Activated T-helper 1 cell treated with anti-CD3 and anti-CD28 coated beads, Interleukin-12 subunit alpha, Interleukin-12 subunit beta, Interleukin-2, Interleukin-4 antibody, amounts not matched to agents 30 ng/mL and 10 ng/mL and 1 ng/mL, durations not matched to agents 14 hours and 24 hours and 36 hours (primary cell): ENCODE measurements at regions of chr3 and their contacts with region 1.

Region 1: GRCh38 chr3:184513276-184514170 is 48.1 kb upstream of the EPHB3 start:
- DNase-seq: peak; percentile 76
- H3K4me3 Mint-ChIP-seq: peak overlapping the region; percentile 51
- H3K27ac Mint-ChIP-seq: no peak overlapping the region
- H3K4me1 Mint-ChIP-seq: peaks cover 7% of the 10 kb centered on the region
- H3K27me3 Mint-ChIP-seq: peaks cover 72% of the 10 kb centered on the region

Region 2: DNA sequence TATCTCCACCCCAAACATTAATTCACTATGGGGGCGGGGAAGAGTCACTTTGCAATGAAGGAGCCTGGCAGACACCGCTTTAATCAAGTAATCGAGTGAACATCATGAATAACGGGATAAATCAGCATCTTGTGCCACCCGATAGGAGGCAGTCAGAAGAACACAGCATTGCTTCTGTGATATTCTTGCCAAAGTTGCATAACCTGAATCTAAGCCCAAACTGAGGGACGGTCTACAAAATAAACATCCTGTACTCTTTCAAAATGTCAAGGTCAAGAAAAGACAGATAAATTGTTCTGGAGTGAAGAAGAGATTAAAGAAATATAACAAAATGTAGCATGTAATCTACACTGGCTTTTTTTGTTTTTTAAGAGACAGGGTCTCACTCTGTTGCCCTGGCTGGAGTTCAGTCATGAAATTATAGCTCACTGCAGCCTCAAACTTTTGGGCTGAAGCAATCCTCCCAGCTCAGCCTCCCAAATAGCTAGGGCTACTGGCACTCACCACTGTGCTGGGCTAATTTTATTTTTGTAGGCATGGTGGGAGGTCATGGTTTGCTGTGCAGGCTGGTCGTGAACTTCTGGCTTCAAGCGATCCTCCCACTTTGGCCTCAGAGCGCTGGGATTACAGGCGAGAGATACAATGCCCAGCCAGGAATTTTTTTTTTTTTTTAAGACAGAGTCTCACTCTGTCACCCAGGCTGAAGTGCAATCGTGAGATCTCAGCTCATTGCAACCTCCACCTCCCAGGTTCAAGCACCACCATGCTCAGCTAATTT is 304.2 kb before region 1 on chr3:
- intact Hi-C with region 1: no loop called
- DNase-seq: no peak
- H3K4me3 Mint-ChIP-seq: no peak overlapping the region
- H3K27ac Mint-ChIP-seq: no peak overlapping the region
- H3K4me1 Mint-ChIP-seq: no peaks in the 10 kb centered on the region
- H3K27me3 Mint-ChIP-seq: peaks cover 28% of the 10 kb centered on the region

Region 3: DNA sequence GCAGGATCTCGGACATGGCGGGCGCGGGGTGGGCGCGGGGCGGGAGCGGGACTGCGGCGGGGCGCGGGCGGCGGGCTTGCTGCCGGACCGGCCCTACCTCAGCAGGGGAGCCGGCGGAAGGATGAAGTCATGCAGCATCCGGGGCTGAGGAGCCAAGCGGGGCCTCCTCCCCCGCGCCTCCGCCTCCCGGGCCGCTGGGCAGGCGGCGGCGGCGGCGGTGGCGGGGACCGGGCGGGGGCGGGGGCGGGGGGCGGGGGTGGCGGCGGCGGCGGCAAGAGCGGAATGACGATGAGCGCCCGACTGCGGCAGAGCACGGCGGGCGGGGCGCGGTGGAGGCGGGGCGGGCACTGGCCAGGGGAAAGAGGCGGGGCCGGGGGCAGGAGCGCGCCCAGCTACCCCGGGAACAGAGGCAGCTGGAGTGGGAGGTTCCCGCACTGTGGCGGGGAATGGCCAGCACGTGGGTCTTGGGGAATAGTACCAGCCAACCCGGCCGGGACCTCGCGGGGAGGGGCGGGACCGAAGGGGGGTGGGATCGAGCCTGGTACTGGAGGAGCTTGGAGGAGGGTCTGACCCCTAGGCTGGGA is 252.2 kb before region 1 on chr3 and contains the start of gene CAMK2N2:
- intact Hi-C with region 1: no loop called
- DNase-seq: peak; percentile 50
- H3K4me3 Mint-ChIP-seq: peak within 1 kb of the TSS; percentile 83
- H3K27ac Mint-ChIP-seq: peak within 1 kb of the TSS; percentile 78
- H3K4me1 Mint-ChIP-seq: peaks cover 17% of the 10 kb centered on the region
- H3K27me3 Mint-ChIP-seq: peaks cover 37% of the 10 kb centered on the region
- total RNA-seq, gene CAMK2N2: 0.15 and 0.52 TPM in 2 replicates

Region 4: DNA sequence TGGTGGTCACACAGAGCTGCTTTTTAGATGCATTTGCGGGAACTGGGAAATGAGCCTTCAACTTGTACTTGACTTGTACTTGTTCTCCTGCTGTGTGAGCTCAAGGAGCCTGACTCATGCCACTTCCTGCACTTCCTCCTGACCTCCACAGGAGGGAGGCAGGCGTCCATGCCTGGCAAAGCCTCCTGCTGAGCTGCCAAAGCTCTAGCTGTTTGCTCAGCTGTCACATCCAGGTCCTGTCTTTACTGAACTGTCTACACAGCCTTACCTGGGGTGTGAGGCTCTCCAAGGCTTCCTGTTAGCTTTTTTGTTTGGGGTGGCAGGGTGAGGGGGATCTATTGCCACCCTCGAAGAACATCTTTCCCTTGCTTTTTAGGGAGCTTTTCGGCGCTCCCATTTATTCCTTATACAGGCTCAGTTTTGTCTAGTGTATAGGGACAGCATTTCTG is 141.9 kb before region 1 on chr3:
- intact Hi-C with region 1: loop called (anchors 1 kb)
- DNase-seq: peak; percentile 44
- H3K4me3 Mint-ChIP-seq: no peak overlapping the region
- H3K27ac Mint-ChIP-seq: no peak overlapping the region
- H3K4me1 Mint-ChIP-seq: peaks cover 11% of the 10 kb centered on the region
- H3K27me3 Mint-ChIP-seq: peaks cover 20% of the 10 kb centered on the region

Region 5: DNA sequence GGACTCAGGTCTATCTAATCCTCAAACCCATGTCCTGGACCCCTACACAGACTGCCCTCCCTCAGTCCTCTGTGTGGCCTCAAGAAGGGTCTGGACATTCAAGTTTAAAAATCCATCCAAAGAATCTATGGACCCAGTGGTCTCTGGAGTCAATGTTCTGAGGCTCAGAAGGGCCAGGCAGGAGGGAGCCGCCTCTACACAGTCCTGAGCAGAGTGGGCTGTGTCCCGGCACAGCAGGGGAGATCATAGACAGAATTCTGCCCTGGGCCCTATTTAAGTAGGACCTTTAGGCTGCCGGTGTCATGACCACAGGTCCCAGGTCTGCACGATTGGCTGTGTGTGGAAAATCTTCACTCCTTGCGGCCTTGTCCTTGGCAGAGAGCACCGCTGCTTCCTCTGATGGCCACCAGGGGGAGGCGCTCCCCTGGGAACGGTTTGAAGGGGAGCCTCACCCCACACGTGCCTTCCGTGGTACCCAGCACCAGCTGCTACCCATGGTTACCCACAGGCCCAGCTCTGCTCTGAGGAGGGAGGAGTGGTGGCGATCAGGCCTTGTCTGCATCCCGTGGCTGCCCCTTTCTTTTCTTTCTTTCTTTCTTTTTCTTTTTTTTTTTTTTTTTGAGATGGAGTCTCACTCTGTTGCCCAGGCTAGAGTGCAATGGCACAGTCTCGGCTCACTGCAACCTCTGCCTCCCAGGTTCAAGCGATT is 95.8 kb before region 1 on chr3:
- intact Hi-C with region 1: loop called (anchors 1 kb)
- DNase-seq: peak; percentile 43
- H3K4me3 Mint-ChIP-seq: no peak overlapping the region
- H3K27ac Mint-ChIP-seq: no peak overlapping the region
- H3K4me1 Mint-ChIP-seq: no peaks in the 10 kb centered on the region
- H3K27me3 Mint-ChIP-seq: peaks cover 5% of the 10 kb centered on the region

Region 6: GRCh38 chr3:184469423-184469822 is 44.1 kb before region 1 on chr3:
- intact Hi-C with region 1: loop called (anchors 1 kb)
- DNase-seq: no peak
- H3K4me3 Mint-ChIP-seq: no peak overlapping the region
- H3K27ac Mint-ChIP-seq: no peak overlapping the region
- H3K4me1 Mint-ChIP-seq: peaks cover 4% of the 10 kb centered on the region
- H3K27me3 Mint-ChIP-seq: peaks cover 24% of the 10 kb centered on the region

Region 7: GRCh38 chr3:184525337-184526087 is 12.0 kb after region 1 on chr3:
- intact Hi-C with region 1: loop called (anchors 1 kb)
- DNase-seq: no peak
- H3K4me3 Mint-ChIP-seq: peak overlapping the region; percentile 82
- H3K27ac Mint-ChIP-seq: peak overlapping the region; percentile 71
- H3K4me1 Mint-ChIP-seq: peaks cover 21% of the 10 kb centered on the region
- H3K27me3 Mint-ChIP-seq: peaks cover 37% of the 10 kb centered on the region